CD4-positive, alpha-beta memory T cell (primary cell): ENCODE measurements at regions of chr16 and their contacts with region 1.

Region 1: DNA sequence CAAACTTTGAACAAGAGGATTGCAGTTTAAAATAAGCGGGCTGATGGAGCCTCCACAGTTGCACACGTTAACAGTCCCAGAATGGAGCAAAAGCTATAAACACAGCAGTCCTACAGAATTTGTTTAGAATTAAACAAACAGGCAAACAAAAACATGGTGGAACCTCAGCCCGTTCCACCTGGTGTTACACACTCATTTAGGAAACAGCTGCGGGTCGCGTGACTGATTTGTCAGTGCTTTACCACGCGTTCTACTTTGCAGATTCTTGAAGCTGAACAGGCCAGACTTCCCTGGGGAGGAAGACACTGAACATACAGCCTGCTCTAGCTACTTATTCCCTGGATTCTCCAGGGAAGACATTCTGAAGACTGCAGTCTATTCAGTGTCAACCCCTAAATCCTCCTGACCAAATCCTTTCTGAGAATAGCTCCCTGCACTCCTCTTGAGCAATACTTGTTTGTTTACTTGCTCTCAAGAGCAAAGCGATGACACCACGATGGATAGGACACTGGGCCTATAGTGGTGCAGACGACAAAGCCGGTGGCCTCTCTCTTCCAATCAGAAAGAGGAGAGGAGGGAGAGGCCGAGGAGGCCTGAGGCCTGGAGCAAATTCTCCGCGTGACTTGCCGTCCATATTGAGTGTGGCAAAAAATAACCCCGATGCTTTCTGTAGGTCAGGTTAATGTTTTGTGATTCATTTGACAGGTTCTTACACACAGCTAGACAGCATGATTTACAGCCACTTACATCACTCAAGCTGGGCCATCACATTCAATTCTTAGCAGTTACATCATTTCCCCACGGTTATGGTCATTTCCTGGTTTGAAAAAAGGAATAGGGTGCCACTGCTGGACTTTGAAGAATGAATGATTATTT is 4.0 kb upstream of the MAP1LC3B start:
- DNase-seq: peak; percentile 89 to 98 (median 92)
- H3K4me3 ChIP-seq: peak overlapping the region in 1 of 2 donors; percentile 9
- H3K4me3 Mint-ChIP-seq: peak overlapping the region; percentile 48 to 83 (median 66)
- H3K27ac ChIP-seq: peak overlapping the region; percentile 64
- H3K27ac Mint-ChIP-seq: peak overlapping the region; percentile 91 to 98 (median 95)
- H3K4me1 ChIP-seq: peaks cover 46% of the 10 kb centered on the region
- H3K4me1 Mint-ChIP-seq: peaks cover 22 to 57% (median 40%) of the 10 kb centered on the region in 4 donors
- H3K27me3 ChIP-seq: no peaks in the 10 kb centered on the region
- H3K27me3 Mint-ChIP-seq: peaks cover 0 to 3% of the 10 kb centered on the region in 2 donors

Region 2: DNA sequence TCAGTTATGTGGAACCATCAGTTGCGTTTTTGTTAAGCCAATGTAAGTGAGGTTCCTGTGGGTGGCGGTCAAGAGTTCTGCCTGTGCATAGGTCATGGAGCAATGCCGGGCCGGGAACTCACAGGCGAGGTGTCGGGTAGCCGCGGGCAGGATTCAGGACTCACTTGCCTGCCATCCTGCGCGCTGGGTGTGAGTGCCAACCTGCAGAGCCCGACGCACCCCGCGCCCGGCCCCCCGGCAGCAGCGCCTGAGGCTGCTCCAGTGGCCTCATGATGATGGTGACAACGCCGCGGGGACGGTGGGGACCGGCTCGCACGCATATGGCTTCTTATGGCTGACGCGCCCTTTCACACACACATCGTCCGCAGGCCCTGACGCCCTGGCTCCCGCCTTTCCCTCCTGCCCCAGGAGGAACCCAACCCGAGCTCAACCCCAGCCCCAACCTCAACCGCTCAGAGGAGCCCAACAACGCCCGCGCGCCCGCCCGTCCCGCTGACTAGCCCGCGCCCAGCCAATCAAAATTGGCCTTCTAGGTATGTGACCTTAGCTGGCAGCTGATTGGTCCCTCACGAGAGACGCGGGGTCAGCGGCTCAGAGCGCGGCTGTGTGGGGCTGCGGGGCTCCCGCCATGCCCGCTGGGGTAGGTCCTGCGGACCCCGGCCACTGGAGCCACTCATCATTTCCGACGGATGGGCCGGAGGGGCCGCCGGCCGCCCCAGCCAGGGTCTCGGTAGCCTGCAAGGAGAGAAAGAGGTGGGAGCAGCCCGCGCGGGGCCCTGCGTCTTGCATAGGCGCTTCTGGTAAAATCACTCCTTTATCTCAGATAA is 71.0 kb before region 1 on chr16 and contains the start of gene C16orf95:
- CTCF ChIA-PET with region 1: interaction called, 41 read pairs
- POLR2A ChIA-PET with region 1: interaction called, 48 read pairs
- intact Hi-C with region 1: loop called (anchors 1 kb)
- DNase-seq: peak; percentile 95 to 99 (median 95)
- H3K4me3 ChIP-seq: peak within 1 kb of the TSS; percentile 64 to 88
- H3K4me3 Mint-ChIP-seq: peak within 1 kb of the TSS; percentile 91 to 97 (median 95)
- H3K27ac ChIP-seq: peak within 1 kb of the TSS; percentile 77
- H3K27ac Mint-ChIP-seq: peak within 1 kb of the TSS; percentile 93 to 98 (median 95)
- H3K4me1 ChIP-seq: peaks cover 9% of the 10 kb centered on the region
- H3K4me1 Mint-ChIP-seq: peaks cover 10 to 21% (median 15%) of the 10 kb centered on the region in 4 donors
- H3K27me3 ChIP-seq: no peaks in the 10 kb centered on the region
- H3K27me3 Mint-ChIP-seq: no peaks in the 10 kb centered on the region
- total RNA-seq, gene C16orf95: 1.6 TPM

Region 3: DNA sequence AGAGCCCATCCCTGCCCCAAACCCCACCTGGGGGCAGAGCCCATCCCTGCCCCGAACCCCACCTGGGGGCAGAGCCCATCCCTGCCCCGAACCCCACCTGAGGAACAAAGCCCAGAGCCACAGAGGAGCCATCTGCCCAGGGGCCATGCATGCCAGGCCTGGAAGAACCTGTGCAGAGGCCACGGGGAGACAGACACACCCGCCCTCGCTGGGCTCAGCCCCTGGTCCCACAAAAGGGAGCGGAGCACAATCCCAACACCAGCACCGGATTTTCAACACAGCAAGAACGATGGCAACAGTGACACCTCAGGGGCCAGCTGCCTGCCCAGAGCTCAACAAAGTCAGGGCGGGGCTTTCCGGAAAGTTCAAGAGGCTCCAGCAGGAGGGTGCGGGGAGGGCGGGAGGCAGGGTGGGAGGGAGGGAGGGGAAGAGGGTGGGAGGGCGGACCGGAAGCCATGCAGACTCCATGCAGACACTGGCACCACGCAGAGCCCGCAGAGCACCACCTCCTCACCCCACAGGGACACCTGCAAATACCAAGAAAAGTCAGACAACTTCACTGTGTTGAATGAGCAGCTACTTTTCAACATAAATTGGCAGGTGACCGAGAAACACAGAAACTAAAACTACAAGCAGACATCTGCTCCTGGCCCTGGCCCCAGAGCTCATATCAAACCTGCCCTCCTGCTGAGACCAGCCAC is 43.1 kb before region 1 on chr16:
- CTCF ChIA-PET with region 1: interaction called, 5 read pairs
- POLR2A ChIA-PET with region 1: interaction called, 17 read pairs
- intact Hi-C with region 1: loop called (anchors 5 kb)
- DNase-seq: peak; percentile 2 to 75 (median 47)
- H3K4me3 ChIP-seq: no peak overlapping the region
- H3K4me3 Mint-ChIP-seq: peak overlapping the region in 7 of 8 donors; percentile 51 to 78 (median 68)
- H3K27ac ChIP-seq: no peak overlapping the region
- H3K27ac Mint-ChIP-seq: peak overlapping the region; percentile 72 to 97 (median 93)
- H3K4me1 ChIP-seq: peaks cover 20% of the 10 kb centered on the region
- H3K4me1 Mint-ChIP-seq: peaks cover 14 to 45% (median 24%) of the 10 kb centered on the region in 4 donors
- H3K27me3 ChIP-seq: no peaks in the 10 kb centered on the region
- H3K27me3 Mint-ChIP-seq: no peaks in the 10 kb centered on the region

Region 4: GRCh38 chr16:87492721-87493607 is 104.8 kb after region 1 on chr16 and contains the start of gene ZCCHC14:
- CTCF ChIA-PET with region 1: no interaction called
- POLR2A ChIA-PET with region 1: interaction called, 5 read pairs
- intact Hi-C with region 1: loop called (anchors 1 kb)
- DNase-seq: peak; percentile 99
- H3K4me3 ChIP-seq: peak within 1 kb of the TSS; percentile 34 to 73
- H3K4me3 Mint-ChIP-seq: peak within 1 kb of the TSS; percentile 88 to 98 (median 92)
- H3K27ac ChIP-seq: peak within 1 kb of the TSS; percentile 49
- H3K27ac Mint-ChIP-seq: peak within 1 kb of the TSS; percentile 81 to 96 (median 93)
- H3K4me1 ChIP-seq: peaks cover 64% of the 10 kb centered on the region
- H3K4me1 Mint-ChIP-seq: peaks cover 32 to 72% (median 48%) of the 10 kb centered on the region in 4 donors
- H3K27me3 ChIP-seq: no peaks in the 10 kb centered on the region
- H3K27me3 Mint-ChIP-seq: no peaks in the 10 kb centered on the region
- total RNA-seq, gene ZCCHC14: 22.7 to 25.1 TPM